ENCODE measurements at regions of chr4 and their contacts with region 1.

Region 1: GRCh38 chr4:1628892-1629698 is 55.0 kb downstream of the FAM53A start:
- DNase-seq: peak; percentile 58 to 76 (median 61)
- H3K4me3 ChIP-seq: no peak overlapping the region
- H3K4me3 Mint-ChIP-seq: no peak overlapping the region
- H3K27ac ChIP-seq: no peak overlapping the region
- H3K27ac Mint-ChIP-seq: no peak overlapping the region
- H3K4me1 ChIP-seq: no peaks in the 10 kb centered on the region
- H3K4me1 Mint-ChIP-seq: no peaks in the 10 kb centered on the region
- H3K27me3 ChIP-seq: no peaks in the 10 kb centered on the region
- H3K27me3 Mint-ChIP-seq: peaks cover 3 to 6% of the 10 kb centered on the region in 2 donors

Region 2: GRCh38 chr4:1351854-1352633 is 277.1 kb before region 1 on chr4:
- CTCF ChIA-PET with region 1: interaction called, 18 read pairs
- POLR2A ChIA-PET with region 1: no interaction called
- DNase-seq: peak; percentile 77 to 89 (median 86)
- H3K4me3 ChIP-seq: no peak overlapping the region
- H3K4me3 Mint-ChIP-seq: peak overlapping the region in 1 of 7 donors; percentile 35
- H3K27ac ChIP-seq: no peak overlapping the region
- H3K27ac Mint-ChIP-seq: peak overlapping the region; percentile 55 to 97 (median 87)
- H3K4me1 ChIP-seq: peaks cover 20% of the 10 kb centered on the region
- H3K4me1 Mint-ChIP-seq: peaks cover 24 to 40% (median 28%) of the 10 kb centered on the region in 3 donors
- H3K27me3 ChIP-seq: no peaks in the 10 kb centered on the region
- H3K27me3 Mint-ChIP-seq: no peaks in the 10 kb centered on the region